BJ (cell line): ENCODE measurements at regions of chr7 and their contacts with region 1.

Region 1: GRCh38 chr7:32347244-32347828 is 142.8 kb downstream of the LSM5 start:
- DNase-seq: no peak
- H3K4me3 ChIP-seq: no peak overlapping the region
- H3K27me3 ChIP-seq: no peaks in the 10 kb centered on the region
- CTCF ChIP-seq: peak; percentile 67

Region 2: DNA sequence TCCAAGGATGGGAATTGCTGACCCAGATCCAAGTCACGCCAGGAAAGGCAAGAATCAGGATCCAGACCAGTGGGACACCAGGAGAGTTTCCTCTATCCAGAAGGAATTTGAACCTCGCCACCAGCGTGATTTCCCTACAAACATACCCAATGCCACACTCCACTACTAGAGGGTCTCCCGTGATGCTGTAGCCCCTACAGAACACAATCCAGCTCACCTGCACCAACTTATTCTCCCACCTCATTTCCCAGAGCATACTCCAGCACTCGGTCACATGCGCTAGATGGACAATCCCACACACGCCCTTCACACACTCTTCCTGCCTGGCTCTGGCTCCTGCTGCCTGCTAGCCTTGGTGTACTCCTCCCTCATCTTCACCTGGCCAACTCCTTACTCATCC is 135.0 kb before region 1 on chr7:
- CTCF ChIA-PET with region 1: interaction called, 18 read pairs
- POLR2A ChIA-PET with region 1: no interaction called
- DNase-seq: no peak
- H3K4me3 ChIP-seq: no peak overlapping the region
- H3K27me3 ChIP-seq: peaks cover 11% of the 10 kb centered on the region
- CTCF ChIP-seq: no peak

Region 3: DNA sequence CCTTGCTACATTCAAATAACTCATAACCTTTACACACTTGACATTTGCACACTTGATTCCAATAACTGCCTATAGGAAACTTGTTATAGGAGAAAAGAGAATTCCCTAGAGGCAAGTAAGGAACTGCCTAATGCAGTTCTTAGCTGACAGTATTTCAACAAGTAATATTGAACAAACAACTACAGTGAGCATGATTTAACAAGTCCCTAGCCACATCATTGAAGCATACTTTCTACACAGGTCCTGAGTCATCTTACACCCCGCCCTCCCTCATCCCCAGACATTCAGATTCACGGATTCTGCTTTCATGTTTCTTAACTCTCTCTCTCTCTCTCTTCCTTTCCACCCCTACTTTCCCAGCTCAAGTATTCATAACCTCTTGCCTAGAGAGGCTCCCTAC is 10.6 kb before region 1 on chr7:
- CTCF ChIA-PET with region 1: interaction called, 16 read pairs
- POLR2A ChIA-PET with region 1: interaction called, 4 read pairs
- DNase-seq: no peak
- H3K4me3 ChIP-seq: no peak overlapping the region
- H3K27me3 ChIP-seq: no peaks in the 10 kb centered on the region
- CTCF ChIP-seq: no peak

Region 4: GRCh38 chr7:32357535-32358277 is 10.4 kb after region 1 on chr7:
- CTCF ChIA-PET with region 1: interaction called, 15 read pairs
- POLR2A ChIA-PET with region 1: no interaction called
- DNase-seq: no peak
- H3K4me3 ChIP-seq: no peak overlapping the region
- H3K27me3 ChIP-seq: peaks cover 2% of the 10 kb centered on the region
- CTCF ChIP-seq: no peak